Naive thymus-derived CD4-positive, alpha-beta T cell (primary cell): ENCODE measurements at regions of chr15 and their contacts with region 1.

Region 1: GRCh38 chr15:59838900-59839299 is 149.8 kb upstream of the BNIP2 start:
- DNase-seq: peak in 2 of 9 donors; percentile 11 to 19
- ATAC-seq: peak; percentile 24
- H3K4me3 ChIP-seq: no peak overlapping the region
- H3K4me3 Mint-ChIP-seq: peak overlapping the region; percentile 27 to 67 (median 62)
- H3K27ac ChIP-seq: no peak overlapping the region
- H3K27ac Mint-ChIP-seq: peak overlapping the region in 8 of 9 donors; percentile 33 to 84 (median 64)
- H3K4me1 ChIP-seq: peaks cover 0 to 14% of the 10 kb centered on the region in 2 donors
- H3K4me1 Mint-ChIP-seq: peaks cover 10 to 58% (median 44%) of the 10 kb centered on the region in 7 donors
- H3K27me3 ChIP-seq: no peaks in the 10 kb centered on the region
- H3K27me3 Mint-ChIP-seq: peaks cover 0 to 12% (median 0%) of the 10 kb centered on the region in 5 donors

Region 2: DNA sequence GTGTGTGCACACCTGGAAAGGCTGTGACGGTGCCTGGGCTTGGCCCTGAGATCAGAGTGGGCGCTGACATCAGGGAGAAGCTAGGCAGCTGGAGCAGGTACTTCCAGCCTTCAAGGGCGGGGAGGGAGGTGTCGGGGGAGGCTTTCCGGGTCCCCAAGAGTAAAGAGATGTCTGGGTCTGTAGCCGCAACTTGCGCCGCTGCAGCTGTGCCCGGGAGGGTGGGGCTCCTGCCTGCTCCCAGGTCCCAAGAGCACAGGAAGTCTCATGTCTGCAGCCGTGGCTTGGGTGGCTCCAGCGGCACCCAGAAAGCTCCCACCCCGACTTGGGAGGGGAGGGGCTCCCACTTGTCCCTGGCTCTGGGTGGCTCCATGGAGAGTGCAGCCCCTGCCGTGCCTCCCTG is 46.5 kb before region 1 on chr15:
- CTCF ChIA-PET with region 1: no interaction called
- POLR2A ChIA-PET with region 1: no interaction called
- intact Hi-C with region 1: loop called in 1 of 2 experiments (anchors 2 kb)
- DNase-seq: peak in 7 of 9 donors; percentile 28 to 69 (median 53)
- ATAC-seq: peak; percentile 62
- H3K4me3 ChIP-seq: no peak overlapping the region
- H3K4me3 Mint-ChIP-seq: peak overlapping the region; percentile 62 to 87 (median 76)
- H3K27ac ChIP-seq: peak overlapping the region; percentile 52
- H3K27ac Mint-ChIP-seq: peak overlapping the region in 8 of 9 donors; percentile 85 to 98 (median 90)
- H3K4me1 ChIP-seq: peaks cover 17 to 53% of the 10 kb centered on the region in 2 donors
- H3K4me1 Mint-ChIP-seq: peaks cover 27 to 92% (median 81%) of the 10 kb centered on the region in 7 donors
- H3K27me3 ChIP-seq: no peaks in the 10 kb centered on the region
- H3K27me3 Mint-ChIP-seq: peaks cover 0 to 34% (median 0%) of the 10 kb centered on the region in 5 donors

Region 3: GRCh38 chr15:59997070-59997701 is 158.3 kb after region 1 on chr15:
- CTCF ChIA-PET with region 1: no interaction called
- POLR2A ChIA-PET with region 1: no interaction called
- intact Hi-C with region 1: no loop called
- DNase-seq: peak in 5 of 9 donors; percentile 34 to 74 (median 51)
- ATAC-seq: peak; percentile 70
- H3K4me3 ChIP-seq: no peak overlapping the region
- H3K4me3 Mint-ChIP-seq: peak overlapping the region; percentile 32 to 82 (median 48)
- H3K27ac ChIP-seq: no peak overlapping the region
- H3K27ac Mint-ChIP-seq: peak overlapping the region in 2 of 9 donors; percentile 10 to 69
- H3K4me1 ChIP-seq: peaks cover 7 to 19% of the 10 kb centered on the region in 2 donors
- H3K4me1 Mint-ChIP-seq: peaks cover 24 to 73% (median 48%) of the 10 kb centered on the region in 7 donors
- H3K27me3 ChIP-seq: peaks cover 41 to 85% of the 10 kb centered on the region in 2 donors
- H3K27me3 Mint-ChIP-seq: peaks cover 87 to 98% (median 93%) of the 10 kb centered on the region in 5 donors